ENCODE measurements at regions of chr6 and their contacts with region 1.

Region 1: GRCh38 chr6:7401075-7401474 is 11.5 kb downstream of the RIOK1 start:
- DNase-seq: no peak
- H3K4me3 ChIP-seq: no peak overlapping the region
- H3K4me1 ChIP-seq: no peaks in the 10 kb centered on the region
- H3K27me3 ChIP-seq: no peaks in the 10 kb centered on the region

Region 2: GRCh38 chr6:7589949-7590917 is 189.2 kb after region 1 on chr6 and contains the start of gene SNRNP48:
- in situ Hi-C with region 1: loop called (anchors 10 kb)
- DNase-seq: peak; percentile 91 to 96
- H3K4me3 ChIP-seq: peak within 1 kb of the TSS; percentile 92
- H3K4me1 ChIP-seq: peaks cover 16% of the 10 kb centered on the region
- H3K27me3 ChIP-seq: no peaks in the 10 kb centered on the region